Naive thymus-derived CD4-positive, alpha-beta T cell (primary cell): ENCODE measurements at regions of chr2 and their contacts with region 1.

Region 1: GRCh38 chr2:218710687-218711549 is at the start of gene TTLL4:
- DNase-seq: peak; percentile 98 to 99 (median 99)
- ATAC-seq: peak; percentile 99
- H3K4me3 ChIP-seq: peak within 1 kb of the TSS; percentile 79
- H3K4me3 Mint-ChIP-seq: peak within 1 kb of the TSS; percentile 91 to 99 (median 97)
- H3K27ac ChIP-seq: peak within 1 kb of the TSS; percentile 86
- H3K27ac Mint-ChIP-seq: peak within 1 kb of the TSS; percentile 58 to 96 (median 90)
- H3K4me1 ChIP-seq: peaks cover 8% of the 10 kb centered on the region in 2 donors
- H3K4me1 Mint-ChIP-seq: peaks cover 17 to 31% (median 19%) of the 10 kb centered on the region in 7 donors
- H3K27me3 ChIP-seq: no peaks in the 10 kb centered on the region
- H3K27me3 Mint-ChIP-seq: peaks cover 0 to 7% (median 0%) of the 10 kb centered on the region in 5 donors
- total RNA-seq, gene TTLL4: 18.7 to 35.8 (median 21.2) TPM

Region 2: GRCh38 chr2:218286570-218287459 is 424.1 kb before region 1 on chr2:
- CTCF ChIA-PET with region 1: no interaction called
- POLR2A ChIA-PET with region 1: no interaction called
- intact Hi-C with region 1: loop called (anchors 1 to 5 kb)
- DNase-seq: peak; percentile 53 to 90 (median 78)
- ATAC-seq: peak; percentile 87
- H3K4me3 ChIP-seq: peak overlapping the region; percentile 66
- H3K4me3 Mint-ChIP-seq: peak overlapping the region; percentile 85 to 97 (median 94)
- H3K27ac ChIP-seq: peak overlapping the region; percentile 93
- H3K27ac Mint-ChIP-seq: peak overlapping the region; percentile 95 to 99 (median 99)
- H3K4me1 ChIP-seq: peaks cover 74 to 77% of the 10 kb centered on the region in 2 donors
- H3K4me1 Mint-ChIP-seq: peaks cover 53 to 87% (median 76%) of the 10 kb centered on the region in 7 donors
- H3K27me3 ChIP-seq: no peaks in the 10 kb centered on the region
- H3K27me3 Mint-ChIP-seq: no peaks in the 10 kb centered on the region

Region 3: DNA sequence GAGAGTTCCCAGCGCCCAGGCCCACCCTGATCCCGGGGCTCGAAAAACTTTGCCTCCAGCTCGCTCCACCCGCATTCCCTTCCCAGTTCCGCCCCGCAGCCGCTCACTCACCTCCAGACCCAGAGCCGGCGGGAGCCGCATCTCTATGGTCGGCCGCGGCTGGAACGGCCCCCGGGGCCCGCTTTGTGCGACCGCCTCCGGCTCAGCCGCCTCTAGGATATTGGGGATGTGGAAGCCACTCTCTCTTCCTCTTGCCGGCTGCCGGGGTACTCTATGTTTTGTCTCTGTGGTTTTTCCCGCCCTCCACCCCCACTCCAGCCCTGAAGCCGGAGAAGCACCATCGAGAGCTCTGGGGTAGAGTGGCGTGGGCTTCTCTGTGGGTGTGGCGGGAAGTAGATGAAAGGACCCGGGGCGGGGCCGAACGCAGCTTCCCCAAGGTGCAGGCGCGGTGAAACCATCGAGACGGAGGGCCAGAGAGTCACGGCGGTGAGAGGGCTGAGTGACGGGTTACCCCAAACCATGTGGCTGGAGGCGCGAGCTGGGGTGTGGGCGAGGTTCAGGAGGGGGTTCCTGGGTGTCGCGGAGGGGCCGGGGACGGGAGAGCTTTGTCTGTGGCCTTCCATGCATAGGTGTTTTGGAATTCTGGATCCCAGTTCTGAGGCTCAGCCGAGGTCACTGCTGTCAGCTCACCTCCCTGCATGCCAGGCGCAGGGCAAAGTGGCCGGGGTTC is 51.5 kb before region 1 on chr2 and contains the starts of genes BCS1L and ZNF142:
- CTCF ChIA-PET with region 1: interaction called, 7 read pairs
- POLR2A ChIA-PET with region 1: interaction called, 11 read pairs
- intact Hi-C with region 1: loop called (anchors 1 kb)
- DNase-seq: peak; percentile 75 to 95 (median 90)
- ATAC-seq: peak; percentile 99
- H3K4me3 ChIP-seq: peak within 1 kb of the TSS; percentile 83
- H3K4me3 Mint-ChIP-seq: peak within 1 kb of the TSS; percentile 90 to 99 (median 98)
- H3K27ac ChIP-seq: peak within 1 kb of the TSS; percentile 80
- H3K27ac Mint-ChIP-seq: peak within 1 kb of the TSS; percentile 74 to 96 (median 93)
- H3K4me1 ChIP-seq: peaks cover 7 to 15% of the 10 kb centered on the region in 2 donors
- H3K4me1 Mint-ChIP-seq: peaks cover 25 to 45% (median 38%) of the 10 kb centered on the region in 7 donors
- H3K27me3 ChIP-seq: no peaks in the 10 kb centered on the region
- H3K27me3 Mint-ChIP-seq: no peaks in the 10 kb centered on the region
- total RNA-seq, gene BCS1L: 21.4 to 62.0 (median 49.0) TPM
- total RNA-seq, gene ZNF142: 38.7 to 49.8 (median 40.8) TPM

Region 4: DNA sequence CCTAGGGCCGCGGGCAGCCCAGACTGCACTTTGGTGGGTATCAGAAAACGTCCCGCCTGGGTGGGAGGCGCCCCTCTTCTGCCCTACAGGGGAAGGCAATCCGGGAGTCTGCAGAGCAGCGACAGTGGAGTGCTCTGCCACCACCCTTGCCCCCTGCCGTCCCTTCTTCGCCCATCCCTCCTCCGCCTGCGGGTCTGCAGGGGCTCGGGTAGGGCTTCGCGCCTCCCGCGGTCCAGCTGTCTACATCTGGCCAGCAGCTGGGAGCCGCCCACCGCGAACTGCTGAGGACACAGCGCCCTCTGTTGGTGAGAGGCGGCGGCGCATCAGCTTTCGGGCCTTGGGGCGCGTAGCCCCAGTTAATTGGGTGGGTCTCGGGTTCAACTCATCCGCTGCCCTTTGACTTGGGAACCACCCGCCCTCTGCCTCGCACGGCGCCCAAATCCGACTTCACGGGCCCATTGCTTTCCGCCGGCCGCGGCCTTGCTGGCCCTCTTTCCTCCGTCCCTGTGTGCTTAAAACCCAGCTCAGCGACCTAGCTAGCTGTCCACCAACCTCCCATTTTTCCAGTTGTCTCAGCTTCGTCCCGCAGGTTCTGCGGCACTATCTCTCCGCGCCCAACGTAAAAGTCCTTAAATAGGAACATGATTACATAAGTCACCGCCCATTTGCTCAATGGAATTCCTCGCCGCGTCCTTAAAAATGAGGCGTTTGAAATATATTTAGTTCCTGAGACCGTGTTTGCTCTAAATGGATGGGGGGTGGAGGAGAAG is 187.4 kb after region 1 on chr2:
- CTCF ChIA-PET with region 1: interaction called, 8 read pairs
- POLR2A ChIA-PET with region 1: no interaction called
- intact Hi-C with region 1: loop called (anchors 2 to 5 kb)
- DNase-seq: peak; percentile 50 to 88 (median 72)
- ATAC-seq: peak; percentile 42
- H3K4me3 ChIP-seq: peak overlapping the region; percentile 65
- H3K4me3 Mint-ChIP-seq: peak overlapping the region; percentile 53 to 87 (median 82)
- H3K27ac ChIP-seq: no peak overlapping the region
- H3K27ac Mint-ChIP-seq: peak overlapping the region in 7 of 9 donors; percentile 33 to 92 (median 71)
- H3K4me1 ChIP-seq: peaks cover 40 to 49% of the 10 kb centered on the region in 2 donors
- H3K4me1 Mint-ChIP-seq: peaks cover 38 to 48% (median 42%) of the 10 kb centered on the region in 7 donors
- H3K27me3 ChIP-seq: peaks cover 0 to 3% of the 10 kb centered on the region in 2 donors
- H3K27me3 Mint-ChIP-seq: peaks cover 20 to 75% (median 40%) of the 10 kb centered on the region in 5 donors

Region 5: DNA sequence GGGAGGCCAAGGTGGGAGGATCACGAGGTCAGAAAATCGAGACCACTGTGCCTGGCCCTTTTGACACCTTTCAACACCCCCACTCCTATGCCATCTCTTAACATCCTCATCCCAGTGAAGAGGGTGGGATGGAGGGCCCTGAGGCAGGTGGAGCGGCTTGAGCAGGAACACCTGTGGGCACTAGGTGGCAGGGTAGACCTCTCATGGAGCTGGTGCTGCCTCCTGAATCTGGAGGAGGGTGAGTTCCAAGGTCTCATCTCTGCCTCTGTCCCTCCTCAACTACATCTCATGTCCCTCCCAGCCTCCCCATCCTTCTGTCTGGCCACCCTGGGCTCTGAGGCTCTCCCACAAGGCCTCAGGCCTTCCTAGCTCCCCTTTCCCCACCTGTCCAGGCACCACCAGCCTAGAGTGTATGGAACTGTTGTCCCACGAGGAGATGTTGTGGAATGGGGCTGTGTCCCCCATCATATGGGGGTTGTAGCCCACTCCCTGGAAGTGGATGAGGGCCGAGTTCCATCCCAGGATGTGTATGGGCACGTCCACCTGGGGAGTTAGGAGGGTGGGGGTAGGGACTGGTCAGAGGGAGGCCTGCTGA is 299.3 kb after region 1 on chr2:
- CTCF ChIA-PET with region 1: no interaction called
- POLR2A ChIA-PET with region 1: no interaction called
- intact Hi-C with region 1: no loop called
- DNase-seq: no peak
- ATAC-seq: peak; percentile 45
- H3K4me3 ChIP-seq: no peak overlapping the region
- H3K4me3 Mint-ChIP-seq: no peak overlapping the region
- H3K27ac ChIP-seq: no peak overlapping the region
- H3K27ac Mint-ChIP-seq: no peak overlapping the region
- H3K4me1 ChIP-seq: no peaks in the 10 kb centered on the region
- H3K4me1 Mint-ChIP-seq: no peaks in the 10 kb centered on the region
- H3K27me3 ChIP-seq: no peaks in the 10 kb centered on the region
- H3K27me3 Mint-ChIP-seq: peaks cover 15 to 61% (median 43%) of the 10 kb centered on the region in 5 donors

Region 6: GRCh38 chr2:219177552-219178376 is 466.8 kb after region 1 on chr2 and contains the start of gene RETREG2:
- CTCF ChIA-PET with region 1: no interaction called
- POLR2A ChIA-PET with region 1: no interaction called
- intact Hi-C with region 1: loop called in 1 of 2 experiments (anchors 5 kb)
- DNase-seq: peak; percentile 79 to 86 (median 83)
- ATAC-seq: peak; percentile 73
- H3K4me3 ChIP-seq: peak within 1 kb of the TSS; percentile 97
- H3K4me3 Mint-ChIP-seq: peak within 1 kb of the TSS; percentile 90 to 99 (median 96)
- H3K27ac ChIP-seq: peak within 1 kb of the TSS; percentile 96
- H3K27ac Mint-ChIP-seq: peak within 1 kb of the TSS; percentile 97 to 100 (median 99)
- H3K4me1 ChIP-seq: peaks cover 44 to 47% of the 10 kb centered on the region in 2 donors
- H3K4me1 Mint-ChIP-seq: peaks cover 48 to 80% (median 69%) of the 10 kb centered on the region in 7 donors
- H3K27me3 ChIP-seq: no peaks in the 10 kb centered on the region
- H3K27me3 Mint-ChIP-seq: no peaks in the 10 kb centered on the region
- total RNA-seq, gene RETREG2: 70.2 to 124 (median 90.9) TPM

Region 7: DNA sequence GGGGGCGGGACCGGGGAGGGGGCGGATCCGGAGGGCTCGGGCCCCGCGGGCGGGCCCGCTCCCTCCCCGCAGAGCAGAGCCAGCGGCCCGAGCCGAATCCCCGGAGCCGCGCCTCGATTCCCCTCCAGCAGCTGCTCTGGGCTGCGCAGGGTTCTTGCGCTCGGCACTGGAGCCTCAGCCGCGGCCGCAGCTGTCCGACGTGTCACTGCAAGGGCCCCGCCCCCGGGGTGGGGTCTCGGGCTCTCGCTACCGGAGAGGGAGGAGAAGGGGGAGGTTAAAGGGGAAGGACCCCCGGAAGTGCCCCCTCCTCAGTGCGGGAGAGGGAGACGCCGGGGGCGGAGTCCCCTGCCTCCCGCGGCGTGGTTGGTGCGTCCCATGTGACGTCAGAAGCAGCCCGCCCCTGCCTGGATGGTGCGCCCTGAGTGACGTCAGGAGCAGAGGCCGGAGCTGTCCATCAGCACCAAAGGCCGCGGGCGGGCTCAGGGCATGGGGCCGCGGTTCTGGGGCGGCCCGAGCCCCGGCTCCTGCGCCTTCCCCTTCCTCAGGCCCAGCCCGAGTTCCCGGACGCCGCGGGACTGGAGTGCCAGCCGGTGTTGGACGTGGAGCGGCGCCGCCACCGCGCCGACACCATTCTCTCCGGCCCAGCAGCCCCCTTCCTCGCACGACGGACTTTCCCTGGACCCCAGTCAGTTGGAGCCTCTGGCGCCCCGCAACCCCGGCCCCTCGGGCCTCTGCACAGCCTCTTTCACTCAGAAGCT is 832.9 kb after region 1 on chr2 and contains the starts of genes CHPF and TMEM198:
- CTCF ChIA-PET with region 1: no interaction called
- POLR2A ChIA-PET with region 1: no interaction called
- intact Hi-C with region 1: loop called in 1 of 2 experiments (anchors 2 kb)
- DNase-seq: peak; percentile 79 to 94 (median 88)
- ATAC-seq: peak; percentile 86
- H3K4me3 ChIP-seq: peak within 1 kb of the TSS; percentile 51
- H3K4me3 Mint-ChIP-seq: peak within 1 kb of the TSS; percentile 83 to 95 (median 90)
- H3K27ac ChIP-seq: peak within 1 kb of the TSS; percentile 78
- H3K27ac Mint-ChIP-seq: peak within 1 kb of the TSS; percentile 71 to 90 (median 78)
- H3K4me1 ChIP-seq: peaks cover 10 to 12% of the 10 kb centered on the region in 2 donors
- H3K4me1 Mint-ChIP-seq: peaks cover 18 to 30% (median 25%) of the 10 kb centered on the region in 7 donors
- H3K27me3 ChIP-seq: no peaks in the 10 kb centered on the region
- H3K27me3 Mint-ChIP-seq: peaks cover 0 to 18% (median 11%) of the 10 kb centered on the region in 5 donors
- total RNA-seq, gene CHPF: 4.3 to 15.3 (median 5.7) TPM
- total RNA-seq, gene TMEM198: 0.45 to 0.69 (median 0.50) TPM in 4 of 5 experiments, not detected in the other